ENCODE measurements at regions of chr9 and their contacts with region 1.

Region 1: DNA sequence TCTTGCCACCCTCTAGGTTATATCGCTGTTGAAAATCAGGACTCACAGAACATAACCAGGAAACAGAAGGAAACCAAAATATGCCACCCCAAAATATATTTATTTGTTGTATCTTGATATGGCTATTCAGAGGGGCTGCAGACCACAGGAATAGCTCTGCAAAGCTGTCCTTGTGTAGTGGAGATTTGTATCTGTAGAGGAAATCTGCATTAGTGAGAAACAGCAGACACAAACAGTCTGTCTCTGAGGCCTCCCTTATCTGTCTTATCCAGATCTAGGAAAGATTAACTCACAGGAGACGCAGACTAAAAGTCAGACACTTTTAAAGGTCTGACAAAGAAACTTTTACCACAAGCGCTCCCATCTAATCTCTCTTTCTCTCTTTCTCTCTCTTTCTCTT is 54.1 kb upstream of the CEMIP2 start:
- DNase-seq: no peak

Region 2: DNA sequence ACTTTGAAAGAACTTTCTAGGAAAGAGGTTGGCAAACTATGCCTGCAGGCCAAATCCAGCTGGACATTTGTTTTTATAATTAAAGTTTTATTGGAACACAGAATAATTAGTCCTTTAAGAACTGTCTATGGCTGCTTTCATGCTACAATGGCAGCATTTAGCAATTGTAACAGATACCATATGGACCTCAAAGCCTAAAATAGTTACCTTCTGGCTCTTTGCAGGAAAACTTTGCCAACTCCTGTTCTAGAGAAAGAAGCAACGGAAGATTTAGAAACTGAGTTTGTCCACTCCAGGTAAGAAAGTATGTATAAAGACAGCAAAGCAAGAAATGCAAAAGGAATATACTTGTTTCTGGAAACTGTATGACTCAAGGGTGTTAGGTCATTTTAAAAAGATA is 419.4 kb before region 1 on chr9:
- intact Hi-C with region 1: no loop called
- DNase-seq: no peak

Region 3: DNA sequence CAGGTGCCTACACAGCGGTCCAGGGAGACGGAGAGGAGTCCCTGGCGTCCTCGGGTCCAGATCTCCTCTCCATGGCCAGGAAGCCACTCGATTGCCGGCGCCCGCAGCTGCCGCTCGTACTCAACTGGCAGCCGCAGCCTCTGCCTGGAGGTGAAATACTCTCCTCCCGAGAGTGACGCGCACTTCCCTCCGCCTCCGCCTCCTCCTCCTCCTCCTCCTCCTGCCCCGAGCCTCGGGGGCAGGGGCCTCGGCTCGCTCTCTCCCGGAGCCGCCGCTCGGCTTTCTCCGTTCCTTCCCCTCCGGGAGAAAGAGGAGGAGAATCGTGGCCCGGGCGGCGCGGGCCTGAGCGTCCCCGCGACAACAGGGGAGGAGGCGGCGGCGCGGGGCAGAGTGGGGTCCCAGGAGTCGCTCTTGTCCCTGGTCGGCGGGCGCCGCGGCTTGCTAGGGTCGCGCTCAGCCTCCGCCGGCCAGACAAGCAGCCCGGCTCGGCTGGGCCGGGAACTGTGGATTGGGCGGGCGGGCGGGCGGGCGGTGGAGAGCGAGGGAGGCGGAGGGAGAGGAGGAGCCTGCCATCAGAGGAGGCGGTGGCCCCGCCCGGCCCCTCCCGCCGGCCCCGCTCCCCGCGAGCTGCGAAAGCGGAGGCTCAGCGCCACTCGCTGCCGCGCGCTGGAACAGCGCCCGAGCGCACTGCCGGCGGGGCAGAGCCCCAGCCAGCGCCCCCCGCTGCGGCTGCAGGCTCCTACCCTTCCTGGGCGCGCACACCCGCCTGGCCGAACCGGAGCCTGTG is 53.9 kb before region 1 on chr9 and contains the start of gene CEMIP2:
- intact Hi-C with region 1: no loop called
- DNase-seq: peak; percentile 97
- total RNA-seq, gene CEMIP2: 11.2 TPM

Region 4: DNA sequence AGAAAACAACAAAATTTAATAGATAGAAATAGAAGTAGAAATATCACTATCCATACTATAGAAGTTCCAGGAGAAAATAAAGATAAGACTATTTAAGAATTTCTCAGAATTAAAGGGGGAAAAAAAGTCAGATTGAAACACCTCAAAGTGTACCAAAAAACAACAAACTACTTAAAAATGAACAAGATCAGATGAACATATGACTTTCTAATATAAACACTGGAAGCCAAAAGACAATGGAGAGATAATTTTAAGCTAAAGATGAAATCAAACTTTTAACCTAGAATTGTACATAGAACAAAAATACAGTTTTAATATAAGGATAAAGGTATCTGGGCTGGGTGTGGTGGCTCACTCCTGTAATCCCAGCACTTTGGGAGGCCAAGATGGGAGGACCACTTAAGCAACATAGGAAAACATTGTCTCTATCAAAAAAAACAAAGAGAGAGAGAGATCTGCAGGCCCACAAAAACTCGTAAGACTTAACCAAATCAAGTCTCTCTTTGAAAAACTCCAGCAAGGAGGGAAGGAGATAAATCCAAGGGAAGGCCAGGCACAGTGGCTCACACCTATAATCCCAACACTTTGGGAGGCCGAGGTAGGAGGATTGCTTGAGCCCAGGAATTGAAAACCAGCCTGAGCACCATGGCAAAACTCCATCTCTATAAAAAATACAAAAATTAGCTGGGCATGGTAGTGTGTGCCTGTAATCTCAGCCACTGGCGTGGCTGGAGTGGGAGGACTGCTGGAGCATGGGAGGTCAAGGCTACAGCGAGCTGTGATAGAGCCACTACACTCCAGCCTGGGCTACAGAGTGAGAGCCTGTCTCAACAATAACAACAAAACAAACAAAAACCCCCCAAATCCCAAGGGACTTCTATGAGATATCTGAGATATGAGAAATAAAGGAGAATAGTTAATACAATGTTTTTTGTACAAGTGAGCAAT is 56.1 kb after region 1 on chr9:
- intact Hi-C with region 1: loop called (anchors 10 kb)
- DNase-seq: no peak